Mammary epithelial cell (primary cell): ENCODE measurements at regions of chr6 and their contacts with region 1.

Region 1: GRCh38 chr6:28737750-28738395 is 185.9 kb downstream of the TRIM27 start:
- DNase-seq: peak; percentile 53
- H3K4me3 ChIP-seq: peak overlapping the region in 1 of 3 experiments; percentile 14
- H3K27ac ChIP-seq: no peak overlapping the region
- H3K4me1 ChIP-seq: peaks cover 13% of the 10 kb centered on the region
- H3K27me3 ChIP-seq: no peaks in the 10 kb centered on the region
- CTCF ChIP-seq: no peak

Region 2: GRCh38 chr6:27592481-27593199 is 1145.2 kb before region 1 on chr6:
- CTCF ChIA-PET with region 1: no interaction called
- dilution Hi-C with region 1: no loop called
- in situ Hi-C with region 1: no loop called
- intact Hi-C with region 1: loop called (anchors 5 kb)
- DNase-seq: peak; percentile 84
- H3K4me3 ChIP-seq: peak overlapping the region; percentile 43 to 62 (median 48)
- H3K27ac ChIP-seq: no peak overlapping the region
- H3K4me1 ChIP-seq: peaks cover 13% of the 10 kb centered on the region
- H3K27me3 ChIP-seq: no peaks in the 10 kb centered on the region
- CTCF ChIP-seq: no peak

Region 3: DNA sequence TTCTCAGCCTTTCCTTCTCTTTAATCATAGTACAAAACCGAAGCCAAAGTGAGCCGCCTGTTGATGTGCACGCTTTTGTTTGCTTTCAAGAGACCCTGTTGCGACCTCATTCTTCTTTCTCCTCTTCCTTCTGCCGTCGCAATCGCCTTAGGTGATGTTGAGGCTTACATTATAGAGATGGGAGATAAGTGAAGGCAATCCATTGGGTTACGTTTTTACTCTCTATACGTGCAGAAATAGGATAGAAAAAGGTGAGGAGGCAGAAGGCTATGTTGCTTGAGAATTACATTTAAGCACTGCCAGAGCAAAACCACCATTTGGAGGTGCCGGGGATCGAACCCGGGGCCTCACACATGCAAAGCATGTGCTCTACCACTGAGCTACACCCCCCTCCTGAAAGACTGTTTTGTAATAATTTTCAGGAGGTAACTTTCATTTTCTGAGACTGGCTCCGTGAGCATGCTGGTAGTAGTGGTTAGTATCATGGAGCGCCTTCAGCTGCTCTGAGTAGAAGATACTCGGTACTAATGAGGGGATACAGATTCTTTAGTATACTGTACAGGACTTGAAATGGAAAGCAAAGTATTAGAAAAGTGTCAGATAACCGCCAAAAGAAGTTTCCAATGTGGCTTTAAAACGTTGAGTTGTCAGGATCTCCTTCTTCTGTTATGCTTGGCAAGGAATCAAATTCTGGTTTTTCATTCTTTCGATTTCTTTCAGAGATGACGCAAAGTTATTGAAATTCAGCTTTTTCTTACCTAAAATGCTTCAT is 20.4 kb after region 1 on chr6:
- CTCF ChIA-PET with region 1: no interaction called
- dilution Hi-C with region 1: no loop called
- in situ Hi-C with region 1: no loop called
- intact Hi-C with region 1: loop called (anchors 2 kb)
- DNase-seq: peak; percentile 84
- H3K4me3 ChIP-seq: peak overlapping the region; percentile 45 to 50 (median 49)
- H3K27ac ChIP-seq: peak overlapping the region; percentile 18
- H3K4me1 ChIP-seq: no peaks in the 10 kb centered on the region
- H3K27me3 ChIP-seq: no peaks in the 10 kb centered on the region
- CTCF ChIP-seq: no peak

Region 4: GRCh38 chr6:28776269-28777146 is 38.6 kb after region 1 on chr6:
- CTCF ChIA-PET with region 1: no interaction called
- dilution Hi-C with region 1: no loop called
- in situ Hi-C with region 1: no loop called
- intact Hi-C with region 1: loop called (anchors 5 kb)
- DNase-seq: no peak
- H3K4me3 ChIP-seq: no peak overlapping the region
- H3K27ac ChIP-seq: no peak overlapping the region
- H3K4me1 ChIP-seq: no peaks in the 10 kb centered on the region
- H3K27me3 ChIP-seq: peaks cover 73% of the 10 kb centered on the region
- CTCF ChIP-seq: no peak

Region 5: DNA sequence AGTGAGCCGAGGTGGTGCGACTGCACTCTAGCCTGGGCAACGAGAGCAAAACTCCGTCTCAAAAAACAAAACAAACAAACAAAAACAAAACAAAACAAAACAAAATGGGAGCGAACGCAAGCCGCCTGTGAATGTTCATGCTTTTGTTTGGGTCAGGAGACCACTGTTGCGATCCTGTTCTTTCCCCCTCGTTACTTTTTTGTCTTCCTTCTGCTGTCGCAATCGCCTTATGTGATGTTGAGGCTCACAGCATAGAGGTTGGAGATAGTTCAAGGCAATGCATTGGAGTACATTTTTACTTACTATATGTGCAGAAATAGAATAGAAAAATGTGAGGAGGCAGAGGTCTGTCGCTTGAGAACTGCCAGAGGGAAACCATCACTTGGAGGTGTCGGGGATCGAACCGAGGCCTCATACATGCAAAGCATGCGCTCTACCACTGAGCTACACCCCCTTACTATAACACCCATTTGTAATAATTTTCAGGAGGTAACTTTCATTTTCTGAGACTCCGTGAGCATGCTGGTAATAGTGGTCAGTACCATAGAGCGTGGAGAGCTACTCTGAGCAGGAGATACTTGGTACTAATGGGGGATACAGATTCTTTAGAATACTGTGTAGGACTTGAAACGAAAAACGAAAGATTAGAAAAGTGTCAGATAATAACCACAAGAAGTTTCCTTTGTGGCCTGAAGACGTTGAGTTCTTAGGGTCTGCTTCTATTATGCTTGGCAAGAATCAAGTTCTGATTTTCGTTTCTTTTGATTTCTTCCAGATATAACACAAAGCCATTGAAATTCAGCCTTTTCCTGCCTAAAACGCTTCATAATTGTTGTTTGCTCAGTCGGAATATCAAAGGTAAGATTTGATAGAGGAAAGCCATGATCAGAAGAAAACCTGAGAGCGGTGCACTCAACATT is 64.8 kb after region 1 on chr6:
- CTCF ChIA-PET with region 1: no interaction called
- dilution Hi-C with region 1: no loop called
- in situ Hi-C with region 1: no loop called
- intact Hi-C with region 1: loop called (anchors 2 kb)
- DNase-seq: peak; percentile 82
- H3K4me3 ChIP-seq: peak overlapping the region; percentile 20 to 44 (median 25)
- H3K27ac ChIP-seq: no peak overlapping the region
- H3K4me1 ChIP-seq: peaks cover 4% of the 10 kb centered on the region
- H3K27me3 ChIP-seq: no peaks in the 10 kb centered on the region
- CTCF ChIP-seq: no peak